ENCODE measurements at regions of chr1 and their contacts with region 1.

Region 1: GRCh38 chr1:156892190-156893047 is 1.1 kb upstream of the PEAR1 start:
- DNase-seq: peak; percentile 96

Region 2: DNA sequence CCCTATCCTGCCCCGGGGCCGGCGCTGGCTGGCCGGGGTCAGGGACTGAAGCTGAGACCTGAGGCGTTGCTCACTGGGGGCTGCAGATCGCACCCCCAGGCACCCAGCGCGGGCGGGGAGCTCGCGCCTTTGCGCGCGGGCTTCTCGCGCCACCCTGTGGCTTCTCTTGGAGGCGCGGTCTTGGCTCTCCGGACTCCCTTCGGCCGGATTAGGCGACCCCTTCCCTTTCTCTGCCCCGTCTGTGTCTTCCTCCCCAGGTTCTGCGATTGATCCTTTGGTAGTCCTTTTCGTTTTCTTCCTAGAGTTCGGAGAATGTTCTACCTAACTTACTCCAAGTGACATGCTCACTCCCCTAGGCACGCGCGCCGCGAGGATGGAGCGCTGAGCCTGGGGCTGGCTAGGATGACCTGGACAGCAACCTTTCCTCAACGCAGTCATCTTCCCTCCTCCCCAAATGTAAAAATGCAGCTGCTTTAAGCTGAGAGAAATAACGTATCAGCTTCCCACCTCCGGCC is 32.2 kb before region 1 on chr1:
- CTCF ChIA-PET with region 1: interaction called, 20 read pairs
- POLR2A ChIA-PET with region 1: interaction called, 3 read pairs
- DNase-seq: peak; percentile 86

Region 3: GRCh38 chr1:156880473-156880872 is 11.9 kb before region 1 on chr1:
- CTCF ChIA-PET with region 1: interaction called, 10 read pairs
- POLR2A ChIA-PET with region 1: no interaction called
- DNase-seq: no peak

Region 4: GRCh38 chr1:156927215-156928042 is 35.0 kb after region 1 on chr1:
- CTCF ChIA-PET with region 1: interaction called, 35 read pairs
- POLR2A ChIA-PET with region 1: interaction called, 3 read pairs
- DNase-seq: peak; percentile 89

Region 5: DNA sequence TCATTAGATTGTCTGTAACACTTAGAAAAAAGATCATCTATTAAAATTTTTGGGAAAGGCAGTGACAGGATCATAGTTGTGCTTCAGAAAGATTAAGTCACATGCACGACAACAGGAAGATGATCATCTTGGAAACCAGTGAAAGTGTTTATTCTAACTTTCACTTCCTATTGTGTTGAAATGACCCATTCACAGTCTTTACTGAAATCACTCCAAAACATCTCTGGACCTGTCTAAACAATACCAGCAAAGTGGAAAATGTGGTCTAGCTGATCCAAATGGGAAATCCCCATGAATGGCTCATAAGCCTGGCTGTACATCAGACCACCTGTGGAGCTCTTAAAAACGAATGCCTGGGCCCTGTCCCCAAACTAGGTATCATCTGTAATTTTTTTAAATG is 356.9 kb after region 1 on chr1:
- CTCF ChIA-PET with region 1: no interaction called
- POLR2A ChIA-PET with region 1: no interaction called
- DNase-seq: no peak